ENCODE measurements at regions of chr6 and their contacts with region 1.

Region 1: DNA sequence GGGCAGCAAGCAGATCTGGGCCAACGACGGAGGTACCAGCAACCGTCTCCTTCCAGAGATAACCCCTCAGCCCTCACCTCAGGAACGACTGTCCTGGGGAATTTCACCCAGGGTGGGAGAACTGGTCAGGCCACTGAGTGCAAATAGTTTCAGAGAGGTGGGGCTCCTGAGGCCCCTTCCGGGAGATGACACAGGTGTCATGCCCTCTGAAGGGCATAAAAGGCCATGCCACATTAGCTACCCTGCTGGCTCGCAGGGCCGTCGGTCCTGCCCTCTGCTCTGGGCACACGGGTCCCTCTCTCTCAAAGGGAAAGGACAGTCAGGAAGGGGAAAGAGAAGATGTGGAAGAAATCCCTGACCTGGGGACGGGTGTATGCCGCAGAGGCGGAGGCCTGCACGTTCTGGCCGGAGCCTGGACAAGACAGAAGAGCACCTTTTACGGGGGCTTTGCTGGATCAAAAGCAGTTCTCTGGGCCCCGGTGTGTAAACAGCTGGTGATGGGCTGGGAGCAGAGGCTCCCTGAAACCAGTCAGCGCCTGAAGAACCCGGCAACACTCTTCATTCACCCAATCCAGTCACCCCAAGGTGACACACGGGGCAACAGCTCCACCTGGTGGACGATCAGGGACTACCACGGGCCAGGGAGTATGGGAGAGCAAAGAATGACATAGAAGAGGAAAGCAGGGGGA is 6.4 kb upstream of the TAF8 start:
- DNase-seq: peak; percentile 85 to 95 (median 91)
- ATAC-seq: peak; percentile 67
- H3K4me3 ChIP-seq: peak overlapping the region; percentile 59
- H3K4me3 Mint-ChIP-seq: peak overlapping the region; percentile 84 to 99 (median 95)
- H3K27ac ChIP-seq: peak overlapping the region; percentile 76
- H3K27ac Mint-ChIP-seq: peak overlapping the region; percentile 73 to 98 (median 94)
- H3K4me1 ChIP-seq: peaks cover 55 to 64% of the 10 kb centered on the region in 2 donors
- H3K4me1 Mint-ChIP-seq: peaks cover 53 to 89% (median 64%) of the 10 kb centered on the region in 7 donors
- H3K27me3 ChIP-seq: no peaks in the 10 kb centered on the region
- H3K27me3 Mint-ChIP-seq: no peaks in the 10 kb centered on the region

Region 2: DNA sequence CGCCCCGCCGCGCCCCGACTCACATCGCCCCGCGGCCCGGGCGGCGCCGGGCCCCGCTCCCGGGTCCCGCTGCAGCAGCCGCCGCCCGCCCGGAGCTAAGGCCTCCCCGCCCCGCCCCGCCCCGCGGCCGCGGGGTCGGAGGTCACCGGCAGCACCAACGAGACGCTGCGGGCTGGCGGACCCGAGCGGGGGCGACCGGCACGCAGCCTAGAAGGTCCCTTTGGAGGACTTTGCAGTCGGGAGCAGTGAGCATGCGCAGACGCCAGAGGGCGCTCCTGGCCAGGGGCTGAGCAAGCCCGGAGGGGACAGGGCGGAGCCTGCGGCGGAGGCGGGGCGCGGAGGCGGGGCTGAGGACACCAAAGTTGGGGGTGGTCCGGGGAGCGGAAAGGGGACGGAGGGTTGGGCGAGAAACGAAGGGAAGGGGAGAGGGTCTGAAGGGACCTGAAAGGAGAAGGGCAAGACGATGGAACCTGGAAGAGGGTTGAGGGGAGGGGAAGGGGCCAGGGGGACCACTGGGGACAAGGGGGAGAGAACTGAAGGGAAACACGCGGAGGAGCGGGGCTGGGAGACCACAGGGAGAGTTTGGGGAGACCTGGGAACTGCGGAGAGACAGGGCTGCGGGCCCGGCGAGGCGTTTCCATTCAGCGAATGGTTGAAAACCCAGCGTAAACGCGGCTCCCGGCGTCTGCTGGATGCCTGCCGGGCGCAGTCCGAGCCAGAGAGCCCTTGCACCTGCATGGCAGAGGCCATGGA is 264.0 kb before region 1 on chr6 and contains the start of gene FRS3:
- CTCF ChIA-PET with region 1: interaction called, 49 read pairs
- POLR2A ChIA-PET with region 1: interaction called, 79 read pairs
- intact Hi-C with region 1: loop called (anchors 1 kb)
- DNase-seq: peak; percentile 96 to 100 (median 97)
- ATAC-seq: peak; percentile 99
- H3K4me3 ChIP-seq: peak within 1 kb of the TSS; percentile 59
- H3K4me3 Mint-ChIP-seq: peak within 1 kb of the TSS; percentile 87 to 95 (median 90)
- H3K27ac ChIP-seq: peak within 1 kb of the TSS; percentile 65
- H3K27ac Mint-ChIP-seq: peak within 1 kb of the TSS; percentile 47 to 86 (median 72)
- H3K4me1 ChIP-seq: peaks cover 7 to 9% of the 10 kb centered on the region in 2 donors
- H3K4me1 Mint-ChIP-seq: peaks cover 10 to 26% (median 22%) of the 10 kb centered on the region in 7 donors
- H3K27me3 ChIP-seq: no peaks in the 10 kb centered on the region
- H3K27me3 Mint-ChIP-seq: peaks cover 0 to 24% (median 0%) of the 10 kb centered on the region in 5 donors
- total RNA-seq, gene FRS3: 5.1 to 10.6 (median 5.5) TPM

Region 3: GRCh38 chr6:41895300-41896233 is 148.4 kb before region 1 on chr6 and contains the start of gene USP49:
- CTCF ChIA-PET with region 1: interaction called, 5 read pairs
- POLR2A ChIA-PET with region 1: interaction called, 5 read pairs
- intact Hi-C with region 1: loop called in 1 of 2 experiments (anchors 1 kb)
- DNase-seq: peak; percentile 83 to 92 (median 90)
- ATAC-seq: peak; percentile 97
- H3K4me3 ChIP-seq: peak within 1 kb of the TSS; percentile 69
- H3K4me3 Mint-ChIP-seq: peak within 1 kb of the TSS in 1 of 10 donors; percentile 94
- H3K27ac ChIP-seq: peak within 1 kb of the TSS; percentile 76
- H3K27ac Mint-ChIP-seq: peak within 1 kb of the TSS in 7 of 9 donors; percentile 78 to 97 (median 93)
- H3K4me1 ChIP-seq: peaks cover 14 to 26% of the 10 kb centered on the region in 2 donors
- H3K4me1 Mint-ChIP-seq: peaks cover 5 to 17% (median 11%) of the 10 kb centered on the region in 7 donors
- H3K27me3 ChIP-seq: no peaks in the 10 kb centered on the region
- H3K27me3 Mint-ChIP-seq: peaks cover 0 to 7% (median 0%) of the 10 kb centered on the region in 5 donors
- total RNA-seq, gene USP49: 1.8 to 6.0 (median 3.1) TPM

Region 4: GRCh38 chr6:41941280-41942066 is 102.5 kb before region 1 on chr6 and contains the start of gene CCND3:
- CTCF ChIA-PET with region 1: interaction called, 32 read pairs
- POLR2A ChIA-PET with region 1: interaction called, 180 read pairs
- intact Hi-C with region 1: loop called (anchors 1 kb)
- DNase-seq: peak; percentile 63 to 93 (median 76)
- ATAC-seq: peak; percentile 86
- H3K4me3 ChIP-seq: peak within 1 kb of the TSS; percentile 68
- H3K4me3 Mint-ChIP-seq: peak within 1 kb of the TSS; percentile 91 to 100 (median 93)
- H3K27ac ChIP-seq: peak within 1 kb of the TSS; percentile 76
- H3K27ac Mint-ChIP-seq: peak within 1 kb of the TSS; percentile 90 to 96 (median 94)
- H3K4me1 ChIP-seq: peaks cover 51 to 68% of the 10 kb centered on the region in 2 donors
- H3K4me1 Mint-ChIP-seq: peaks cover 40 to 83% (median 69%) of the 10 kb centered on the region in 7 donors
- H3K27me3 ChIP-seq: no peaks in the 10 kb centered on the region
- H3K27me3 Mint-ChIP-seq: no peaks in the 10 kb centered on the region
- total RNA-seq, gene CCND3: 285 to 433 (median 313) TPM

Region 5: GRCh38 chr6:42104095-42104806 is 60.3 kb after region 1 on chr6:
- CTCF ChIA-PET with region 1: interaction called, 4 read pairs
- POLR2A ChIA-PET with region 1: interaction called, 4 read pairs
- intact Hi-C with region 1: loop called in 1 of 2 experiments (anchors 1 kb)
- DNase-seq: peak; percentile 39 to 79 (median 73)
- ATAC-seq: peak; percentile 90
- H3K4me3 ChIP-seq: peak overlapping the region; percentile 68
- H3K4me3 Mint-ChIP-seq: peak overlapping the region; percentile 66 to 89 (median 70)
- H3K27ac ChIP-seq: peak overlapping the region; percentile 41
- H3K27ac Mint-ChIP-seq: peak overlapping the region in 5 of 9 donors; percentile 20 to 78 (median 58)
- H3K4me1 ChIP-seq: peaks cover 0 to 4% of the 10 kb centered on the region in 2 donors
- H3K4me1 Mint-ChIP-seq: peaks cover 0 to 28% (median 9%) of the 10 kb centered on the region in 7 donors
- H3K27me3 ChIP-seq: no peaks in the 10 kb centered on the region
- H3K27me3 Mint-ChIP-seq: no peaks in the 10 kb centered on the region

Region 6: DNA sequence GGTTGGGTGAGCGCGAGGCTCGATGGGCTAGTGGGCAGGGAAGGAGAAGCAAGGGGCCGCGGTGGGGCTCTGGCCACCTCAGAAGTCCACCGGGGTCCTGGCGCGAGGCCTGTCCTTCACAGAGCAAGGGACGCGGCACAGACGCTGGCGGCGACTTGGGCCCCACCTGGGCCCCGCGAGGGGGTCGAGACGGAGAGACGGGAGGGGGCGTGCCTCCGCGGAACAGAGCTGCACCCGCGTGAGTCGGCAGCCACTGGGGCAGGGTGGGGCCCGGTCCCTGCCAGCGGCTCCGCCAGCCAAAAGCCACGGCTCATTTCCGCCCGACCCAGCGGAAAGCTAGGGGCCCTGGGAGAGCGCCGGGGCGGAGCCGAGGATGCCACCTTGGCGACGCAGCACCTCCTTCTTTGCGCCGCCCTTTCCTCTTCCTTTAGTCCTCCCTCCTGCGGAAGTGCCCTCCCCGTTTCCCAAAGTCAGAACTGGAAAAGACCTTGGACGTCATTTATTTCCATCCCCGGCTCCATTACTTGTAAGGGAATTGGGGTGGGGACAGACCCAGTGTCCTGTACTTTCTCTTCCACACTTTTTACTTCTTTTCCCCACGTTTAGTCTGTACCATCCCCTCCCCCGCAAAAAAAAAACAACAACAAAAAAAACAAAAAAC is 1009.7 kb after region 1 on chr6 and contains the start of gene CUL7:
- CTCF ChIA-PET with region 1: no interaction called
- POLR2A ChIA-PET with region 1: no interaction called
- intact Hi-C with region 1: loop called in 1 of 2 experiments (anchors 5 kb)
- DNase-seq: peak; percentile 72 to 90 (median 88)
- ATAC-seq: peak; percentile 99
- H3K4me3 ChIP-seq: peak within 1 kb of the TSS; percentile 70
- H3K4me3 Mint-ChIP-seq: peak within 1 kb of the TSS; percentile 86 to 99 (median 94)
- H3K27ac ChIP-seq: peak within 1 kb of the TSS; percentile 89
- H3K27ac Mint-ChIP-seq: peak within 1 kb of the TSS; percentile 92 to 99 (median 97)
- H3K4me1 ChIP-seq: peaks cover 8 to 24% of the 10 kb centered on the region in 2 donors
- H3K4me1 Mint-ChIP-seq: peaks cover 37 to 58% (median 50%) of the 10 kb centered on the region in 7 donors
- H3K27me3 ChIP-seq: no peaks in the 10 kb centered on the region
- H3K27me3 Mint-ChIP-seq: no peaks in the 10 kb centered on the region
- total RNA-seq, gene CUL7: 9.8 to 14.5 (median 12.7) TPM